ENCODE measurements at regions of chr7 and their contacts with region 1.

Region 1: GRCh38 chr7:151423936-151424335 is 14.1 kb upstream of the WDR86 start:
- DNase-seq: no peak
- H3K4me3 ChIP-seq: no peak overlapping the region
- H3K27ac ChIP-seq: no peak overlapping the region
- H3K4me1 ChIP-seq: peaks cover 37% of the 10 kb centered on the region
- H3K27me3 ChIP-seq: no peaks in the 10 kb centered on the region
- CTCF ChIP-seq: no peak

Region 2: DNA sequence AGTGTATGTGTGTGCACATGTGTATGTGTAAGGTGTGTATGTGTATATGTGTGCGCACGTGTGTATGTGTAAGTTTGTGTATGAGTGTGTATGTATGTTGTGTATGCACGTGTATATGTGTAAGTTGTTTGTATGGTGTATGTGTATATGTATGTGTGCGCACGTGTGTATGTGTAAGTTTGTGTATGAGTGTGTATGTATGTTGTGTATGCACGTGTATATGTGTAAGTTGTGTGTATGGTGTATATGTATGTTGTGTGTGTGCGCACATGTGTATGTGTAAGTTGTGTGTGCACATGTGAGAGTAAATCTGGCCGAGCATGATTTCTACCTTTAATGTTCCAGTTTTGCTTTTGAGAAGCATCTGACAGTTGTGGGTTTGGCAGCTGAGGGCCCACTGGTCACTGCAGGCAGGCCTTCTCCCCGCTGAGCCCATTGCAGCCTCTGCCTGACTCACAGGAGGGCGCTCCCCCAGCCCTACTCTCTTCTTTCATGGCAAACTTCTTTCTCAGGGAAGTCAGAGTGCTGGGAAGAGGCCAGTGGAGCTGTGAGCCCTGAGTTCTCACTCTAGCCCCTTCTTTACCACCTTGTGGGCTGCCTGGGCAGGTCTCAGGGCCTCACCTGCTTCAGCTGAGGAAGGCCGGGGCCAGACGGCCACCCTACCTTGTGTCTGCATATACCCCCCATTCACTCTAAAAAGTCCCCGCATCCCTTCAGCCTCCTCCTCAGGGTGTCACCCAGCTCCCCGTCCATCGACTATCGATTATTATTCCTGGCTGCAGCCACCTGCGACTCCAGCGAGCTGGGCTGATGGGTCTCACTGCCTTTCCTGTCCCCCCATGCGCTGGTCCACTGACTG is 25.3 kb before region 1 on chr7:
- CTCF ChIA-PET with region 1: no interaction called
- POLR2A ChIA-PET with region 1: interaction called, 25 read pairs
- intact Hi-C with region 1: no loop called
- DNase-seq: no peak
- H3K4me3 ChIP-seq: no peak overlapping the region
- H3K27ac ChIP-seq: no peak overlapping the region
- H3K4me1 ChIP-seq: peaks cover 9% of the 10 kb centered on the region
- H3K27me3 ChIP-seq: no peaks in the 10 kb centered on the region
- CTCF ChIP-seq: no peak